Aorta (tissue), 5 donors: ENCODE measurements at regions of chr19 and their contacts with region 1.

Region 1: GRCh38 chr19:51593969-51594773 is 23.1 kb downstream of the ZNF175 start:
- DNase-seq: peak; percentile 99 to 100
- ATAC-seq: peak; percentile 99
- H3K4me3 ChIP-seq: peak overlapping the region; percentile 21 to 35
- H3K27ac ChIP-seq: no peak overlapping the region
- H3K4me1 ChIP-seq: peaks cover 0 to 4% of the 10 kb centered on the region in 2 donors
- H3K27me3 ChIP-seq: no peaks in the 10 kb centered on the region

Region 2: DNA sequence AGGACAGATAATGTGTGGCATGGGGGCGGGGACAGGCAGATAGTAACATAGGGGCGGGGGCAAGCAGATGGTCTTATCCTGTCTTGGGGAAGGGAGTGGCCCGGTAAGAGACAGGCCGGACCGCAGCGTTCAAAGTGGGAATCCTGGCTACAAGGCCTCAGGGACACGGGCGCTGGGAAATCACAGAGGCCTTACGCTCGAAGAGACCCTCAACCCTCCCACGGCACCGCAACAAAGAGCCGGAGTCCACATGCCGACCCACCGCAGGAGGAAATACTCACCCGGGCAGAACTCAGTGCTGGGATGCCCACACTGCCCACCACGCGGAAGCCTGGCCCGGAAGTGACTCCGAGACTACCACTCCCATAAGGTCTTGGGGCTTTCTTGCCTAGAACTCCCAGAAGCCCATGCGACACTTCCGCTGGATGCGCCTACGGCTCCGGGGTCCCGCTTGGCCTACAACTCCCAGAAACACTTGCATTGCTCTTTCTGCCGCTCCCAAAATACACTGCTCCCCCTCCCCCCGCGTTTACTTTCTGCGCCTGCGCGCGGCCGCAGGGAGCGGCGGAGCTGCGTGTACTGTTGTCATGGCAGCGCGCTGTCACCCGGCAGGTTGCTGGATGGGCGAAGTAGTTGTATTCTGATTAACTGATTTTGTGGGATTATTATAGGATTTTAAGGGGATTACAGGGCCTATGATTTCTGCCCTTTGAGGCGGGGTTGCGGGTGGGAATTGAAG is 485.9 kb before region 1 on chr19 and contains the start of gene CTU1:
- intact Hi-C with region 1: loop called (anchors 1 to 5 kb)
- DNase-seq: peak; percentile 98 to 99
- ATAC-seq: peak; percentile 99
- H3K4me3 ChIP-seq: peak within 1 kb of the TSS; percentile 49 to 65
- H3K27ac ChIP-seq: no peak within 1 kb of the TSS
- H3K4me1 ChIP-seq: no peaks in the 10 kb centered on the region
- H3K27me3 ChIP-seq: peaks cover 0 to 2% of the 10 kb centered on the region in 2 donors
- total RNA-seq, gene CTU1: 4.1 to 5.4 TPM

Region 3: DNA sequence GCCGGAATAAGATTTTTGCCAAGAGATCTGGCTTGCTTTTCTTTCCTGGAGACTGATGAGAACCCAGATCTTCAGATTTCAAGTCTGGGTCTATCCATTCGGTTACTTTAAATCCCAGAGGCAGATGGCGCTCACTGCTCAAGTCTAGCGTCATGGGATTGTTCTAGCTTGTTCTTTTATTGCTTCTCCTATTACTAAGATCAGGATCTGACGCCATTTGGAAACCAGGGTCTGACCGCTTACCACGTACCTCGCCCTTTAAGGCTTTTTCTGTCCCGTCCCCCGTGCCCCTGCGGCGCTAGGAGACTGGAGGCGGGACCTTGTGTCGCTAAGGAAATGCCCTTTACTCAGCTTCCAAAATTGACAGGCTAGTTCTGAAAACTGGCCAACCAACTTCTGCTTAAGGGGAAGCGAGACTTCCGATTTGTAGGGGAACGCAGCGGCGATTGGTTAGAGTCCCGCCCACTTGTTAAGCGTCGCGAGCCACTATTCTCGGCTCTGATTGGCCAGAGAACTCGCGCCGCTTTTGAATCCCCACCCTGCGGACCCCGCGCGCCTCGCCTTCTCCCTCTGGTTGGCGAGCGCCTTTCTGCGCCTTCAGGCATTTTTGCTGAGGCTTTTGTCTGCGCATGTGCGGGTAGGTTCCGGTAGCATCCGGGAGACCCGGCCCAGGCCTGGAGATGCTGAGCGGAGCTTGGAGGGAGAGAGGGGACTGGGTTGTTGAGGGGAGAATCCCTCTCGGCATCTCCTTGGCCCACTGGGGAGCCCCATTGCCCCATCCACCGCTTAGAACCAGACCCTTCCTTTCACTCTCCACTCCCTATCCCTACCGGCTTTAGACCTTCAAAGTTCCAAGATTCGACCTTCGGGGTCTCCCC is 200.0 kb before region 1 on chr19:
- intact Hi-C with region 1: loop called in 1 of 2 experiments (anchors 10 kb)
- DNase-seq: peak; percentile 95 to 96
- ATAC-seq: peak; percentile 96
- H3K4me3 ChIP-seq: peak overlapping the region; percentile 13 to 30
- H3K27ac ChIP-seq: peak overlapping the region in 1 of 2 donors; percentile 7
- H3K4me1 ChIP-seq: no peaks in the 10 kb centered on the region
- H3K27me3 ChIP-seq: no peaks in the 10 kb centered on the region

Region 4: GRCh38 chr19:51570962-51571575 is 23.1 kb before region 1 on chr19 and contains the start of gene ZNF175:
- intact Hi-C with region 1: loop called in 1 of 2 experiments (anchors 2 kb)
- DNase-seq: peak; percentile 95 to 98
- ATAC-seq: peak; percentile 98
- H3K4me3 ChIP-seq: peak within 1 kb of the TSS; percentile 84 to 94
- H3K27ac ChIP-seq: no peak within 1 kb of the TSS
- H3K4me1 ChIP-seq: peaks cover 2 to 4% of the 10 kb centered on the region in 2 donors
- H3K27me3 ChIP-seq: no peaks in the 10 kb centered on the region
- total RNA-seq, gene ZNF175: 15.1 to 16.6 TPM